ENCODE measurements at regions of chr3 and their contacts with region 1.

Region 1: GRCh38 chr3:100893590-100893989 is 99.6 kb downstream of the ABI3BP start:
- DNase-seq: no peak
- H3K4me3 ChIP-seq: no peak overlapping the region
- CTCF ChIP-seq: peak; percentile 62

Region 2: DNA sequence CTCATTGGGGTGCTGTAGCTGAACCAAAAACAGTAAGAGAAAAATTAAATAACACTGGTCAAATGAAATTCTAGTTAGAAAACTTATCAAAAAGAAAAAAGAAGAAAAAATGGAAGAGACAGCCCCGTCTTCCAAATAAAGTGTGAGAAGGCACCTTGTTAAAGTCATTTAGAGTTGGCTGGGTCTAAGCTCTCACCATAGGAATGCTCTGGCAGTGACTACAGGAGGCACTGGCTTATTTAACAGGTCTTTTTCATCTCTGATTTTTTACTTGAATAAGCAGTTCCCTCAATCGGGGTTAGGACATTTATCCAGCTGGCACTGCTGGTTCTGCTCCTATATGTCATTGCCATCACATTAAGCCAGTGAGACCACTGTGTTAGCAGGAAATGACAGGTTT is 101.2 kb after region 1 on chr3:
- in situ Hi-C with region 1: loop called (anchors 5 kb)
- DNase-seq: no peak
- H3K4me3 ChIP-seq: no peak overlapping the region
- CTCF ChIP-seq: no peak

Measured in astrocyte of the cerebellum (primary cell).